AG04449 (cell line): ENCODE measurements at regions of chr17 and their contacts with region 1.

Region 1: GRCh38 chr17:38444151-38444550 is 15.9 kb downstream of the ARHGAP23 start:
- DNase-seq: no peak
- H3K4me3 ChIP-seq: no peak overlapping the region
- CTCF ChIP-seq: peak; percentile 97

Region 2: DNA sequence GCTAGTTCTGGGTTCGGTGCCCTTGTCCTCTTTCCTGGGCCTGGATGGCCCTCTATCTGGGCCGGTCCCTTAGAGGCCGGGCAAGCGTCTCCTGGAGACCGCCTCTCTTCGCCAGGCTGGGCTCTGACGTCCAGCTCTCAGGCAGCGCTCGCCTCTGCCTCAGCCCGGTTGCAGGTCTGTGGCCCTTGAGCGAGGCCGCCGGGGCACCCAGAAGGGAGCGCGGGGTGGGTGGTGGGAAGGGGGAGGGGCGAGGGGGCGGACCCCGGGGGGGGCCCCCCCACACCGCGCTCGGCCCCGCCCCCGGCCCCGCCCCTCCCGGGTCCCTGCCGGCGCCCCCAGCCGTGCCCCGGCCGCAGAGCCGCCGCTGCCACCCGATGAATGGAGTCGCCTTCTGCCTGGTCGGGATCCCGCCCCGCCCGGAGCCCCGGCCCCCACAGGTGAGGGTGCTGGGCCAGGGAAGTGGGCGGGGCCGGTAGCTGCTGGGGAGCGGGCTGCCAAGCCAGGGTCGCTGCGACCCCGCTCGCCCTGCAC is 16.0 kb before region 1 on chr17 and contains the start of gene ARHGAP23:
- CTCF ChIA-PET with region 1: interaction called, 56 read pairs
- POLR2A ChIA-PET with region 1: interaction called, 3 read pairs
- DNase-seq: no peak
- H3K4me3 ChIP-seq: peak within 1 kb of the TSS; percentile 74
- CTCF ChIP-seq: no peak

Region 3: GRCh38 chr17:38454516-38454915 is 10.4 kb after region 1 on chr17:
- CTCF ChIA-PET with region 1: interaction called, 17 read pairs
- POLR2A ChIA-PET with region 1: interaction called, 3 read pairs
- DNase-seq: no peak
- H3K4me3 ChIP-seq: peak overlapping the region; percentile 77
- CTCF ChIP-seq: no peak